ENCODE measurements at regions of chr15 and their contacts with region 1.

Region 1: DNA sequence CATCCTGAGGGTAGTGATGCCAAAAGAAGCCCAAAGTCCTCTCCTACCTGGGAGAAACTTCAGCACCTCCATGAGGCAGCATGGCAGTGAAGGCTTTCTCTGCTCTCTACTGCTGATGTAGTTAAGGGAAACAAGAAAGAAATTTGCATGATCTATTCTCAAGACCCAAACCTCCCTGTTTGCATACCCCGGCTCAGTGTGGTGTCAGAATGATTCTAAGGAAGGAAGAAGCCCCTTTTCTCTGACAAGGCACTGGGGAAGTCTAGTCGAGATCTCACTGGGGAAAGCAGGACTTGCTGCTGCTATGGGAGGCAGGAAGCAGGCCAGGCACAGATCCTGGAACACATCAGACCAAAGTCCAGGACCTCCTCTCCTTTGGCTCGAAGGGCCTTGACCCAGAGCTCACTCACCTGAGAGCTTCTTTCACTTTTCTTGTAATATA is 89.4 kb upstream of the ICE2 start:
- DNase-seq: no peak
- ATAC-seq: no peak
- H3K4me3 ChIP-seq: no peak overlapping the region
- H3K27ac ChIP-seq: no peak overlapping the region
- H3K4me1 ChIP-seq: no peaks in the 10 kb centered on the region
- H3K27me3 ChIP-seq: no peaks in the 10 kb centered on the region
- CTCF ChIP-seq: no peak

Region 2: GRCh38 chr15:60685346-60685937 is 117.1 kb after region 1 on chr15:
- intact Hi-C with region 1: no loop called
- DNase-seq: no peak
- ATAC-seq: no peak
- H3K4me3 ChIP-seq: no peak overlapping the region
- H3K27ac ChIP-seq: no peak overlapping the region
- H3K4me1 ChIP-seq: peaks cover 5% of the 10 kb centered on the region
- H3K27me3 ChIP-seq: no peaks in the 10 kb centered on the region
- CTCF ChIP-seq: no peak

Region 3: GRCh38 chr15:61660579-61660978 is 1092.3 kb after region 1 on chr15:
- intact Hi-C with region 1: loop called (anchors 10 kb)
- DNase-seq: no peak
- ATAC-seq: no peak
- H3K4me3 ChIP-seq: no peak overlapping the region
- H3K27ac ChIP-seq: no peak overlapping the region
- H3K4me1 ChIP-seq: no peaks in the 10 kb centered on the region
- H3K27me3 ChIP-seq: no peaks in the 10 kb centered on the region
- CTCF ChIP-seq: no peak